Lower leg skin (tissue), 4 donors: ENCODE measurements at regions of chr11 and their contacts with region 1.

Region 1: DNA sequence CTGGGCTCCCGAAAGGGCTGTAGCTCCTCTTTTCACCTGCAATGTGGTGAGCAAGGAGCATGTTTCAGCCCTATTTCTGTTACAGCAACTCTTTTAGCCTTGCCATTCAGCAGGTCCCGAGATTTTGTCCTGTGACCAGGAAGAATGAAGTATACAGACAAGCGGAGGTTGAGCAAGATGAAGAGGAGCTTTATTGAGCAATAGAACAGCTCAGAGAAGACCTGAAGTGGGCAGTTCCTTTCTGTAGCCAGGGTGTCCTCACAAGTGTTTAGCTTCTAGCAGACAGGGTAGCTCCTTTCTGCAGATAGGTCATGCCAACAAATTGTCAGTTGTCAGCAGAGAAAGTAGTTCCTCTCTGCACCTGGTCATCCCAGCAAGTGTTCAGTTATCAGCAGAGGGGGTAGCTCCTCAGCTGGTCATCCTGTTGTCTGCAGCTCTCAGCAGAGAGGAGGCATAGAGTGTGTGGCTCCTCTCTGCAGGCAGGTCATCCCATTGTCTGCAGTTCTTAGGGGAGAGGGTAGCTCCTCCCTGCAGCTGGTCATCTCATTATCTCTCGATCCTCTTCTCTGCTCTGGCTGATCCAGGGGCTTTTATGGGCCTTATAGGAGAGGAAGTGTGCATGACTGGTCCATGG is 5.4 kb upstream of the OR56A4 start:
- DNase-seq: no peak
- H3K4me3 ChIP-seq: no peak overlapping the region
- CTCF ChIP-seq: no peak
- POLR2A ChIP-seq: no peak

Region 2: DNA sequence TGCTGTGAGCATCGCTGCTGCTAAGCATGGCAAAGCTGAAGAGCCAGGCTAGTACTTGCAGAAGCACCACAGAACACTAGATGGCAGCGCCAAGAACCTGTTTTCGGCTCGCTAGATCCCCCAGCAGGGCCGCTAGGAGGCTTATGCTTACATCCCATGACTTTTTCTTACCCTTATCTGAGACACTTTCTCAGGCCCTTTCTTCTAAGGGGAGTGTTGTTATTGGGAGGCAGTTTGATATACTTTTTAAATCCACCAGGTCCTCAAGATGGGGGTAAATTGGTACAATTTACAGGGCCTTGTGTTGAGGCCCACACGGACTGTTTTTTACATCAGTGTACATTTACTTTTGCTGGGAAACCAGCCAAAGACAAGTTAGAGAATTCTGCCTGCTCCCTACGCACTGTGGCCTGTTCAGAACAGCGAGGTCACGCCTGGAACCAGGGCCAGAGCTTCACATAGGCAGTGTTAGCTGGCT is 411.7 kb before region 1 on chr11:
- intact Hi-C with region 1: no loop called
- DNase-seq: peak; percentile 52 to 85
- H3K4me3 ChIP-seq: no peak overlapping the region
- CTCF ChIP-seq: no peak
- POLR2A ChIP-seq: no peak

Region 3: DNA sequence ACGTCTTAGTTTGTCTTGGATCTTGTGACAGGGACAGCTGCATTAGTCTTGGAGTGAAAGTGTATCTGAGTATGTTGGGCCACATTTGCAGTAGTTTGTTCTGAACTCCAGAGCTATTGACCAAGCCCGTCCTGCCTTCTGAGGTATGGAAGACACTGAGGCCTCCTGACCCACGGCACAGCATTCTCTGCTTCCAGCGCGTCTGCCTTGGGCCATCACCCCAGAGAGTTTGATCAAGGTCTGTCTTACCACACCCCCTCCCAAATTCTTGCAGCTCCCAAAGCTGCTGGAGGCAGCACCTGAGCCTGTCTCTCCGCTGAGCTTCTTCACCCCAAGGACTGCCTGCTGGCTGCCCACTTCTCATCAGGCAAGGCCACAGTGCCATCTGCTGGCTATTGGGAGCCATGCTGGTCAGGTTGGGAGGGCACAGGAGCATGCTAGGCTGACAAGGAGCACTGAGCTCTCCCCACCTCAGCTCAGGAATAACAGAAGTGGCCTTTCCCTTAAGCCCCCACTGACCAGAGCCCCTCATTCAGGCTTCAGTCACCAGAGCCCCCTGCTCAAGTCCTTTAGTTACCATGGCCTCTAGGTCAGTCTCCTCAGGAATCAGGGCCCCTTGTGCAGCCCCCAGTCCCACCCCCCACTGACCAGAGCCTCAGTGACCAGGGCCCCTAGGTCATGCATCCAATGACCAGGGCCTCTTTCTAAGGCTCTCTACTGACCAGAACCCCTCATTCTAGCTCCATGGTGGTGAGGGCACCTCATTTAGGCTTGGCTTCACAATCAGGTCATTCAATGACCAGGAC is 350.9 kb after region 1 on chr11:
- intact Hi-C with region 1: loop called (anchors 5 kb)
- DNase-seq: peak; percentile 69 to 92
- H3K4me3 ChIP-seq: no peak overlapping the region
- CTCF ChIP-seq: peak in 1 of 3 donors; percentile 31
- POLR2A ChIP-seq: no peak